CD4-positive, alpha-beta memory T cell (primary cell): ENCODE measurements at regions of chr2 and their contacts with region 1.

Region 1: DNA sequence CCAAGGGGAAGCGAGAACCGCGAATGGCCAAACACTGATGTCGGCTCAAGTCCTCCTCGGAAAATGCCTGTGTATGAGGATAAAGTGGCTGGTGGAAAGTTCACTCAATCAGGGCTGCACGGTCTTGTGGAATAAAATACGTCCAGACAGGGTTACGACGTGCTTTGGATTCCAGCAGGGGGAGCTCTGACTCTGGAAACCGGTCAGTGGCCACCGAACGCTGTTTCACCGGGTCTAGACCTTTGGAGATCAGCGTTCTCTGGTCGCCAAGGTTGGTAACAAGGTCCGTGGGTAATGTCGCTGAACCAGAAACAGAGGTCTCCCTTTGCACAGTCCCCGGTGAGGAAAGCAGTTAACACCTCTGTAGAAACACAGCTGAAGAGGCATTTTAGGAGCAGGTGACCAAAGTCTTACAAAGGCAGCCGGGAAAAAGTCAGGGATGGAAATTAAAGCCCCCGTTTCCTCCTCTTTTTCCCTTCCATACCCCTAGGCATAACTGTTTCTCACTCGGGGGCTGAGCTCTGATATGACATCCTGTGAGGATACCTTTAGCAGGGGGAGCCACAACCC is 47.8 kb downstream of the CDCA7 start:
- DNase-seq: peak; percentile 62 to 70 (median 68)
- H3K4me3 ChIP-seq: no peak overlapping the region
- H3K4me3 Mint-ChIP-seq: peak overlapping the region in 1 of 8 donors; percentile 17
- H3K27ac ChIP-seq: no peak overlapping the region
- H3K27ac Mint-ChIP-seq: peak overlapping the region in 1 of 7 donors; percentile 56
- H3K4me1 ChIP-seq: peaks cover 6% of the 10 kb centered on the region
- H3K4me1 Mint-ChIP-seq: peaks cover 0 to 6% (median 6%) of the 10 kb centered on the region in 4 donors
- H3K27me3 ChIP-seq: peaks cover 8% of the 10 kb centered on the region
- H3K27me3 Mint-ChIP-seq: peaks cover 31 to 55% of the 10 kb centered on the region in 2 donors

Region 2: DNA sequence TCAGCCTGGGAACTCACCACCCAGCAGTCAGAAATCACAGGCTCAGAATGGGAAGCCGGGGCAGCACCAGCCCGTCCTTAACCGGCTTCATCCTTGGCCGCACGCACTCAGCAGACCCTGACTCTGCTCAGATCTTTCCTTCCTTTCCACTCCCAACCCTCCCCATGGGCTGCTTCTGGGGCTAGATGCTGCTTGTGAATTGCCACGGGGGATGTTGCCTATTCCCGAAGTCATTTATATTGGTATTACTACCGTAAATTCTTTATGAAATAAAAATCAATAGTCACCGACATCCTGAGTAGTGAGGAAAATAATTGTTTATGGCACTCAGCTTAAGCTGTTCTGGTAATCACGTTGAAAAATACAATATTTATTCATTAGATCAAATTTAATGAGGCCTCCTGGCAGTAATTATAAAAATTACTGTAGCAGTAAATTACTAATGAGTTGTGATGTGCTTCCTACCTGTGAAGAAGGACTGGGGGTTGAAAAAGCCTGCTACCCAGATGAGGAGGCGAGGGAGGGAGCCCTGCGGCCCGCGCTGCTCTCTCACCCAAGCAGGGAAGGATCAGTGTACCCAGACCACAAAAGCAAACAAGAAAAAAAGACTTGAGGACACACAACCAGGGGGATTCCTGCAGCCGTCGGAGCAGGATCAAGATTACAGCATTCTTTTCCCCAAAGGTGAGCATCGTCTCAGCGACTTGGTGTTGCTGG is 16.3 kb before region 1 on chr2:
- CTCF ChIA-PET with region 1: interaction called, 13 read pairs
- POLR2A ChIA-PET with region 1: no interaction called
- intact Hi-C with region 1: no loop called
- DNase-seq: no peak
- H3K4me3 ChIP-seq: no peak overlapping the region
- H3K4me3 Mint-ChIP-seq: no peak overlapping the region
- H3K27ac ChIP-seq: no peak overlapping the region
- H3K27ac Mint-ChIP-seq: no peak overlapping the region
- H3K4me1 ChIP-seq: no peaks in the 10 kb centered on the region
- H3K4me1 Mint-ChIP-seq: no peaks in the 10 kb centered on the region
- H3K27me3 ChIP-seq: no peaks in the 10 kb centered on the region
- H3K27me3 Mint-ChIP-seq: peaks cover 1 to 2% of the 10 kb centered on the region in 2 donors

Region 3: DNA sequence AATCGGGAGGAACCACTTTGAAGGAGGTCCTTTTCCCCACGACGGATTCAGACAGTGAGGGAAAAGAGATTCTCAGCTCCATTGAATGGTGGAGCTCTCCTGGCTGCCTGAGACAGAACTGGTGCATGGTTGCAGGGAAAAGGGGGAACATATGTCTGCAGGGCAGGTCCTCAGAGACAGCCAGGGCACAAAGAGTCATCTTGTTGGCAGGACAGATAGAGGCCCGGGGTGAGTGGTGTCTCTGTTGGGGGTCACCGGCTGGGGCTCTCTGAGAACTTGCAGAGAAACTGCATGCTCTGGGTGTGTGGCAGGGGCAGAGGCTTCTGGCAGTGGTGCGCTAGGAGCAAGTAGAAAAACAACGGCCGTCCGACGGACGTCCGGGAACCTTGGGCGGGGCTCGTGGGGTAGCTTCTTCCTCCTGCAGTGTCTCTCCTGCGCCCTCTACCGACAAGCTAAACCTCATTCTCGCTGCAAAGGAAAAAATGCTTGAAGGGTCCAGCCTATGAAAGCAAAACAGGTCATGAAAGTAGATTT is 46.5 kb after region 1 on chr2:
- CTCF ChIA-PET with region 1: interaction called, 24 read pairs
- POLR2A ChIA-PET with region 1: no interaction called
- intact Hi-C with region 1: loop called (anchors 1 kb)
- DNase-seq: peak; percentile 46 to 63 (median 59)
- H3K4me3 ChIP-seq: no peak overlapping the region
- H3K4me3 Mint-ChIP-seq: peak overlapping the region; percentile 64 to 81 (median 75)
- H3K27ac ChIP-seq: no peak overlapping the region
- H3K27ac Mint-ChIP-seq: peak overlapping the region in 5 of 7 donors; percentile 18 to 81 (median 44)
- H3K4me1 ChIP-seq: peaks cover 8% of the 10 kb centered on the region
- H3K4me1 Mint-ChIP-seq: peaks cover 12 to 19% (median 17%) of the 10 kb centered on the region in 4 donors
- H3K27me3 ChIP-seq: no peaks in the 10 kb centered on the region
- H3K27me3 Mint-ChIP-seq: peaks cover 3 to 4% of the 10 kb centered on the region in 2 donors

Region 4: GRCh38 chr2:174078275-174078674 is 675.8 kb after region 1 on chr2:
- CTCF ChIA-PET with region 1: interaction called, 9 read pairs
- POLR2A ChIA-PET with region 1: no interaction called
- intact Hi-C with region 1: loop called (anchors 1 kb)
- DNase-seq: peak in 1 of 5 donors; percentile 2
- H3K4me3 ChIP-seq: no peak overlapping the region
- H3K4me3 Mint-ChIP-seq: no peak overlapping the region
- H3K27ac ChIP-seq: no peak overlapping the region
- H3K27ac Mint-ChIP-seq: no peak overlapping the region
- H3K4me1 ChIP-seq: no peaks in the 10 kb centered on the region
- H3K4me1 Mint-ChIP-seq: no peaks in the 10 kb centered on the region
- H3K27me3 ChIP-seq: no peaks in the 10 kb centered on the region
- H3K27me3 Mint-ChIP-seq: no peaks in the 10 kb centered on the region

Region 5: GRCh38 chr2:174682578-174683391 is 1280.3 kb after region 1 on chr2:
- CTCF ChIA-PET with region 1: no interaction called
- POLR2A ChIA-PET with region 1: no interaction called
- intact Hi-C with region 1: loop called (anchors 10 kb)
- DNase-seq: peak; percentile 66 to 79 (median 73)
- H3K4me3 ChIP-seq: peak overlapping the region; percentile 49 to 69
- H3K4me3 Mint-ChIP-seq: peak overlapping the region; percentile 89 to 97 (median 93)
- H3K27ac ChIP-seq: peak overlapping the region; percentile 84
- H3K27ac Mint-ChIP-seq: peak overlapping the region; percentile 86 to 96 (median 94)
- H3K4me1 ChIP-seq: peaks cover 48% of the 10 kb centered on the region
- H3K4me1 Mint-ChIP-seq: peaks cover 36 to 60% (median 48%) of the 10 kb centered on the region in 4 donors
- H3K27me3 ChIP-seq: no peaks in the 10 kb centered on the region
- H3K27me3 Mint-ChIP-seq: no peaks in the 10 kb centered on the region